Activated T-helper 2 cell treated with anti-CD3 and anti-CD28 coated beads, Interferon-gamma antibody, Interleukin-2, Interleukin-4, amounts not matched to agents 10 μg/mL and 5 μg/mL and 100 μg/mL, durations not matched to agents 14 hours and 24 hours and 36 hours (primary cell): ENCODE measurements at regions of chr3 and their contacts with region 1.

Region 1: DNA sequence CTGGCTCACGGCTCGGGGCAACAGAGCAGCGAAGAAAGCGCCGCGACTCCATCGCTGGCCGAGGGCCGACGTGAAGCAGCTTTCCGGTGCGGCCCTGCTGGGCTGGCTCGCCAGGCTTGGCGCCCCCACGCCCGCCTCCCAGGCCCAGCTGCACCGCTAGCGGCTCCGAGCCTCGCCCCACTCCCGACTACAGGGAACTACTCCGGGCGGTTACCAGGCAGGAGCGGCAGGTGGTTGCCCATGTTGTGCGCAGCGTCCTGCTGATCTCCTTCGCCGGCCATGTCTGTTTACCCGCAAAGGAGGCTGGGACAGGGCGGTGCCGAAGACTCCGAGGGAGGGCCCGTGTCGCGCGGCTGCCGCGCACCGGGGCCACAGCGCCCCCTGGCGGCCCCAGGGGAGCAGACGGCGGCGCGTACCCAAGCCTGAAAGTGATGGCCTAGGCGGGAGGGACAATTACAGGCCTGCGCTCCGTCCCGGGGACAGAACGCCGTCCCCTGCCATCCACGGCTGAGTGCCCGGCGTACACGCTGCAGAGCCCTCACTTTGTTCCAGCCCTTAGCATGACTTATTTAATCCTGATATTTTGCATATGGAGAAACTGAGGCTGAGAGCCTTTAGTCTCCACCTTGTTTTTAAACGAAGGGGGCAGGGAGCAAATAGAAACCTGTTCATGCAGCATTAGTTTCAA is at the start of gene CRBN:
- DNase-seq: peak; percentile 85
- H3K4me3 Mint-ChIP-seq: peak within 1 kb of the TSS; percentile 95
- H3K27ac Mint-ChIP-seq: peak within 1 kb of the TSS; percentile 87
- H3K4me1 Mint-ChIP-seq: peaks cover 46% of the 10 kb centered on the region
- H3K27me3 Mint-ChIP-seq: no peaks in the 10 kb centered on the region
- total RNA-seq, gene CRBN: 35.0 and 40.6 TPM in 2 replicates

Region 2: GRCh38 chr3:3027976-3028567 is 151.5 kb before region 1 on chr3:
- intact Hi-C with region 1: loop called (anchors 5 kb)
- DNase-seq: no peak
- H3K4me3 Mint-ChIP-seq: no peak overlapping the region
- H3K27ac Mint-ChIP-seq: no peak overlapping the region
- H3K4me1 Mint-ChIP-seq: peaks cover 6% of the 10 kb centered on the region
- H3K27me3 Mint-ChIP-seq: peaks cover 7% of the 10 kb centered on the region

Region 3: DNA sequence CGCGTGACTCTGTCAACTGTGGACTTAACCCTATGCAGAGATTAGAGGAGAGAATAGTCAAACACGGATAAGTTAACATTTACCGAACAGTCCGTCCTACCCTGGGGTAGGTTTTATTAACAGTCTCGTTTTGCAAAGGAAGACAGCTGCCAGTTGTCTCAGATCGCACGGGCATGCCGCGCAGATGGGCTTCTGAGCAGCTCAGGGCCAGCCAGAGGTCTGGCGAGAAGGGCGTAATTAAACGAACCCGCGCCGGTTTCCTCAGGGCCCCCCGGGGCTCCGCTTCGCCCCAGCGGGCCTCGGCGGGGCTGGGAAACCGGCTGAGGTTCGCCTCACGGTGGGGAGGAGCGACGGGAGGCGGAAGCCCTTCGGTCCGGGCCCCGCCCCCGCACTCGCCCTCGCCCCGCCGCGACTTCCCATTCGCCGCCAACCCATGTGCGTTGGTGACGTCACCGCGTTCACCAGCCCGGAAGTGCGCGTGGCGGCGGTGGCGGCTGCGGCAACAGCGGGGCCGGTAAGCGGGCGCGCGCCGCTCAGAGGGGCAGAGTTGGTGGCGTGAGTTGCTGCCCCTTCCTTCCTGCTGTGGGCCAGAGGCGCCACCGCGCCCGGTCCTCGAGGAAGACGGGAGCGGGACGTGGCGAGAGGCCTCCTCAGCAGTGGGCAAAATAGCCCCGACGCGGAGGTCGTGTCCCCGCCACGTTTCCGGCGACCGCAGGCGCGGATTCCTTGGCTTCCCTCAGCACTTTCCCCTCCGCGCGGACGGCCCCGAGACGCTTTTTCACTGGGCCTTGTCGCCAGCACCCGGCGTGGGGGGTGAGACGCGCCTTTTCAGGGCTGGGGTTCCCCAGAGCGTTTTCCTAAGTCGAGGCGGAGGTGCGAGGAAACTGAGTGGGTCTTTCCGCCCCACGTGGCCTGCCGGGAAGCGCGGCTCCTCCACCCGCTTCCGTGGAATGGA is 52.8 kb before region 1 on chr3 and contains the start of gene TRNT1:
- intact Hi-C with region 1: loop called (anchors 1 kb)
- DNase-seq: peak; percentile 93
- H3K4me3 Mint-ChIP-seq: peak within 1 kb of the TSS; percentile 96
- H3K27ac Mint-ChIP-seq: peak within 1 kb of the TSS; percentile 95
- H3K4me1 Mint-ChIP-seq: peaks cover 12% of the 10 kb centered on the region
- H3K27me3 Mint-ChIP-seq: no peaks in the 10 kb centered on the region
- total RNA-seq, gene TRNT1: 49.9 and 50.1 TPM in 2 replicates

Region 4: GRCh38 chr3:3221528-3221927 is 42.0 kb after region 1 on chr3:
- intact Hi-C with region 1: no loop called
- DNase-seq: no peak
- H3K4me3 Mint-ChIP-seq: no peak overlapping the region
- H3K27ac Mint-ChIP-seq: no peak overlapping the region
- H3K4me1 Mint-ChIP-seq: no peaks in the 10 kb centered on the region
- H3K27me3 Mint-ChIP-seq: no peaks in the 10 kb centered on the region

Region 5: GRCh38 chr3:3288255-3288654 is 108.7 kb after region 1 on chr3:
- intact Hi-C with region 1: no loop called
- DNase-seq: no peak
- H3K4me3 Mint-ChIP-seq: no peak overlapping the region
- H3K27ac Mint-ChIP-seq: no peak overlapping the region
- H3K4me1 Mint-ChIP-seq: no peaks in the 10 kb centered on the region
- H3K27me3 Mint-ChIP-seq: no peaks in the 10 kb centered on the region

Region 6: DNA sequence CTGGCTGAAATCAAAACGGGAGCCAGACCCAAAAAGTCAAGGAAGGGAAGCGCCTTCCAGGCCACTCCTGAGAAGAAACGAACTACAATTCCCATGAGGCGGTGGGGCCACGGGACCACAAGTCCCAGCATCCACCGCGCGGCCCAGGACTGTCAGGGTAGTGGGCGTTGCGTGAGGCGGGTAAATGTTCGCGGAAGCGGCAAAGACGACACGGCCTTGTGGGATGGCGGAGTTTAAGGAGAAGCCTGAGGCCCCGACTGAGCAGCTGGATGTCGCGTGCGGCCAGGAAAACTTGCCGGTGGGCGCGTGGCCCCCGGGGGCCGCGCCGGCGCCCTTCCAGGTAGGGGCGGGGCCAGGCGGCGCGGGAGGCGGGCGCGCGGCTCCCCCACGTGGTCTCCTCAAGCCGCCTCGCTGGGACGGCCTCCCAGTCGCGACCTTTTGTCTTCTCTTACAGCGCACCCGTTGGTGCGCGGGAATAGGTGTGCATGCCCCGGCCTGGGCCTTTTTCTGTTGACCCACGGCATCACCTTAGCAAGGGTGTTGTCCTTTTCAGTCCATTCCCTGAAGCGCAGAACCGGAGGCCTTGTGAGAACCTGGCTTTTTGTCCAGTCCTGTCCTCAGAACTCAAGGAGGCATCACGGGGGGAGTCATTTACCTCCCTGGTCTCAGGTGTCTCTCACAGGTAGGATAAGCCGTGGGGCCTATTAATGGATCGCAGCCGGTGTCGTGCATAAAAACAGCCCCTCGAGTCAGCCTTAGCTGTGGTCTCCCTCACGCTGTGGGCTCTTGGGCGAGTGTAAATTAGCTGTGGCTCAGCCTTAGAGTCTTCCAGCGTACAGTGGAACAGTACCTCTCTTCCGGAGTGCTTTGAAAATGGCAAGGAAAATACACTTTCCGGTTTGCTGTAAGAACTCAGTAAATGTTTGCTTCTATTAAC is 1123.9 kb after region 1 on chr3 and contains the start of gene SETMAR:
- intact Hi-C with region 1: loop called (anchors 1 kb)
- DNase-seq: peak; percentile 75
- H3K4me3 Mint-ChIP-seq: peak within 1 kb of the TSS; percentile 90
- H3K27ac Mint-ChIP-seq: peak within 1 kb of the TSS; percentile 95
- H3K4me1 Mint-ChIP-seq: peaks cover 22% of the 10 kb centered on the region
- H3K27me3 Mint-ChIP-seq: peaks cover 4% of the 10 kb centered on the region
- total RNA-seq, gene SETMAR: 16.0 and 17.6 TPM in 2 replicates